ENCODE measurements at regions of chr21 and their contacts with region 1.

Region 1: GRCh38 chr21:31132574-31133242 is 94.4 kb upstream of the KRTAP19-8 start:
- DNase-seq: peak; percentile 80
- H3K4me3 Mint-ChIP-seq: peak overlapping the region; percentile 79
- H3K27ac Mint-ChIP-seq: peak overlapping the region; percentile 98
- H3K4me1 Mint-ChIP-seq: peaks cover 73% of the 10 kb centered on the region
- H3K27me3 Mint-ChIP-seq: no peaks in the 10 kb centered on the region

Region 2: GRCh38 chr21:30216041-30216723 is 916.5 kb before region 1 on chr21 and contains the start of gene CLDN8:
- intact Hi-C with region 1: no loop called
- DNase-seq: no peak
- H3K4me3 Mint-ChIP-seq: no peak within 1 kb of the TSS
- H3K27ac Mint-ChIP-seq: no peak within 1 kb of the TSS
- H3K4me1 Mint-ChIP-seq: no peaks in the 10 kb centered on the region
- H3K27me3 Mint-ChIP-seq: no peaks in the 10 kb centered on the region
- total RNA-seq, gene CLDN8: not detected in 2 replicates

Region 3: GRCh38 chr21:30315698-30316097 is 817.0 kb before region 1 on chr21:
- intact Hi-C with region 1: no loop called
- DNase-seq: no peak
- H3K4me3 Mint-ChIP-seq: no peak overlapping the region
- H3K27ac Mint-ChIP-seq: no peak overlapping the region
- H3K4me1 Mint-ChIP-seq: no peaks in the 10 kb centered on the region
- H3K27me3 Mint-ChIP-seq: no peaks in the 10 kb centered on the region

Region 4: DNA sequence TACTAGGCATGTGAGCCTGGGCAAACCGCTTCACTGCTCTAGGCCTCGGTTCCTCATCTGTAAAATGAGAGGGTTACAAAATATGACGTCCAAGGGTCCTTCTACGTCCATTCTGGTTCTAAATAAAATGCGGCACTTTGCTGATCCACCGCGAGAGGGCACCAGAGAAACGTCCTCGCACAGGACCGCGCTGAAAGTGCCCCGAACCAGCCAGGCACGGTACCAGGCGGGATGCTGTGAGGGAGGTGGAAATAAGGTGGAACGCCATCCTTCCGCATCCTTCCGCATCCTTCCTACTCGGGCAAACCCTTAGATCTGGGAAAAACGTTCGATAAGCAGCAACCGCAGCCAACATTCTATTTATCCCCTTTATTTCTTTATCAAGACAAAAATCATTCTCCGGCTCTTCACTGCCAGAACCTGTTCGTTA is 34.1 kb before region 1 on chr21:
- intact Hi-C with region 1: loop called (anchors 1 kb)
- DNase-seq: peak; percentile 57
- H3K4me3 Mint-ChIP-seq: no peak overlapping the region
- H3K27ac Mint-ChIP-seq: no peak overlapping the region
- H3K4me1 Mint-ChIP-seq: peaks cover 25% of the 10 kb centered on the region
- H3K27me3 Mint-ChIP-seq: peaks cover 17% of the 10 kb centered on the region

Region 5: DNA sequence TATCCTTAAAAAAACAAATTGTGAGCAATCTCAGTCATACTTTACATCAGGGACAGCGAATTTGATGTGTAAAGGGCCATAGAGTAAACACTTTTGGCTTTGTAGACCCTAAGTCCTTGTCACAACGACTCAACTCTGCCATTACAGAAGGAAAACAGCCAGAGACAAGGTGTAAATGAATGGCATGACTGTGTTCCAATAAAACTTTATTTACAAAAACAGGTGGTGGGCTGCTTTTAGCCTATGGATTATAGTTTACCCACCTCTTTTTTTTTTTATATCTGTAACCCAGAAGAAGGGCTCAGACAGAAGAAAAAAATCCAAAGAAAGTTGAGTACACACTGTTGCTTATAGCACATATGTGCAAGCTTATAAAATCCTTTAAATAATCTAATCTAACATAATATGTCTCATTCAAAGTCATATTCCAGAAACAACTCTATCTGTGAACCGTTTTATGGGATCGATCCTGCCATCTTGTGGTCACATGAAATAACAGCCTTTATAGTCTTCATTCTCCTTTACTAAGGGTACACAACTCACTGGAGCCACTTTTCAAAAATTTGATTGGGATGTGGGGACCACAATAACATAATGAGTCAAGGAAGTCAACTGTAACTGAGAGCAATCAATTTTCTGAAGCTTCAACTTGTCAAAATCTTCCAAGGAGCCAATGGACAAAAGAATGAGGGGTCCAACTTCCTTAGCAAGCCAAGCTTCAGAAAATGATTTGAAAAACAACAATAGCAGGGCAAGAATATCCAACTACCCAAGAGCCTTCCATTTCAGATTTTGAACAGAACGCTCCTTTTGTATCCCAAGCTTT is 47.8 kb after region 1 on chr21:
- intact Hi-C with region 1: loop called (anchors 1 kb)
- DNase-seq: no peak
- H3K4me3 Mint-ChIP-seq: peak overlapping the region; percentile 92
- H3K27ac Mint-ChIP-seq: peak overlapping the region; percentile 98
- H3K4me1 Mint-ChIP-seq: peaks cover 70% of the 10 kb centered on the region
- H3K27me3 Mint-ChIP-seq: no peaks in the 10 kb centered on the region

Region 6: DNA sequence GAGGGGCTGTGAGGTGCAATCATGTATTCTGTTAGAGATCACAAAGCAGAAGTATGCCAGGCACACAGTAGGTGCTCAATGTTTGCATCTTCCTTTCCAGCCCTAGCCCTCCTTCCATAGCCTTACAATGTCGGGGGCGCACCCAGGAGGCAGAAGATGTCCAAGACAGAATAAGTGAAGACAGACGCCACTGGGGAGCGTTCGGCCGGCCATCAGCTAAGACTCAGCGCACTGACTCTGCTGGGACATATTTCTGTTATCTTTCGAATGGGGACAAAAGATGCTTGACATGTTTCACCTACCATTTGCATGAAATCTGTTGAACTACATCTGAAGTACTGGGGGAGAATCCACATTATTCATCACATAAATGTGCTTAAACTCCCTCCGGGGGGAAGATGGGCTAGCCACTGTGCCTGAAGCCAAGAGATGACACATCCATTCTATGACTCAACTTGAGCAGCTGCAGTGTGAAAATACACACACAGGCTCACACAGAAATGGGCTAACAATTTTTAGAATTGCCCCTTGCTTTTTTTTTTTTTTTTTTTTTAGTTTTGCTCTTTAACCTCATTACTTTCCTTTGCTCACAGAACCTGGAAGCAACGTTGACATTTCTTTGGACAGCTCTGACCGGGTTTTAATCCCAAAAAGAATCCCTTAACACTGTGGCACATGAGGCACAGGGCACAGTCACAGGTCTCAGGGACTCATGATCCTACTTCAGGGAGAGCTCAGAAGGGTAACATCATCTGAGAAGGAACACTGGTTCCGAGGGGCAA is 203.4 kb after region 1 on chr21:
- intact Hi-C with region 1: loop called (anchors 1 kb)
- DNase-seq: no peak
- H3K4me3 Mint-ChIP-seq: peak overlapping the region; percentile 17
- H3K27ac Mint-ChIP-seq: peak overlapping the region; percentile 67
- H3K4me1 Mint-ChIP-seq: peaks cover 78% of the 10 kb centered on the region
- H3K27me3 Mint-ChIP-seq: no peaks in the 10 kb centered on the region

Region 7: DNA sequence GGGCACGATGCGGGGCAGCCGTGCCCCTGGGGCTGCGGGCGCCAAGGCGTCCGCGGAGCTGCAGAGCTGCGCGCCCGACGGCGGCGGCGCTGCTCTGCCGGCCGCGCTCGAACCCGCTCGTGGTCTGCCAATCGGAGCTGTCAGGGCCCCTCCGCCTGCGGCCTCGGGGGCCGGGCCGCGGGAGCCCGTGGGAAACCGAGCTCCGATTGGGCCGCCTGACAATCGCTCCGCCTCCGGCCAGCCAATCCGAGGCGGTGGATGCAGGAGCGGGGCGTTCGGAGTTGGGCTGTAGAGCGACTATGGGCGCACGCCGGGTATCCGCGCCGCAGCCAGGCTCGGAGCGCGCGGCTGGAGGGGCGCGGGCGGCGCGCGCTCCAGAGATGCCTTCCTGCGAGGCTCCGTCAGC is 426.3 kb after region 1 on chr21:
- intact Hi-C with region 1: loop called (anchors 1 kb)
- DNase-seq: peak; percentile 93
- H3K4me3 Mint-ChIP-seq: peak overlapping the region; percentile 89
- H3K27ac Mint-ChIP-seq: no peak overlapping the region
- H3K4me1 Mint-ChIP-seq: peaks cover 48% of the 10 kb centered on the region
- H3K27me3 Mint-ChIP-seq: peaks cover 35% of the 10 kb centered on the region